CD4-positive, alpha-beta memory T cell (primary cell): ENCODE measurements at regions of chr2 and their contacts with region 1.

Region 1: GRCh38 chr2:85750587-85751575 is 2.9 kb upstream of the ATOH8 start:
- DNase-seq: peak in 4 of 5 donors; percentile 31 to 46 (median 44)
- H3K4me3 ChIP-seq: no peak overlapping the region
- H3K4me3 Mint-ChIP-seq: peak overlapping the region in 4 of 8 donors; percentile 9 to 71 (median 24)
- H3K27ac ChIP-seq: no peak overlapping the region
- H3K27ac Mint-ChIP-seq: no peak overlapping the region
- H3K4me1 ChIP-seq: peaks cover 17% of the 10 kb centered on the region
- H3K4me1 Mint-ChIP-seq: peaks cover 5 to 30% (median 12%) of the 10 kb centered on the region in 4 donors
- H3K27me3 ChIP-seq: peaks cover 23% of the 10 kb centered on the region
- H3K27me3 Mint-ChIP-seq: peaks cover 32 to 60% of the 10 kb centered on the region in 2 donors

Region 2: DNA sequence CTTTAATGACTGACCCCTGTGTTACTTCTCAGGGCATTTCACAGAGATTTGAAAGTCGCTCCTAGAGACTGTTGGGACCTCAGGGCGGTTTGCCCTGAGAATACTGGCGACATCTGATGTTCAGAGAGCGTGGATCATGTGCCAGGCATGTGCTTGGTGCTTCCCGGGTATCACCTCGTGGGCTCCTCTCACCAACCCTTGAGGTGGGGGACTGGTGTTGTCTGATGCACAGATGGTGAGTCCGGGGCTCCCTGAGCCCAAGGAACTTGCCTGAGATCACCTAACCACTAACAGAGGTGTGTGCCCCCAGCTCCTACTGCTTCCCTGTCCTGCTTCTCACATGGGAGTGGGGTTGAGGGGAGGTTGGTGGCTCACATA is 19.1 kb after region 1 on chr2:
- CTCF ChIA-PET with region 1: no interaction called
- POLR2A ChIA-PET with region 1: no interaction called
- intact Hi-C with region 1: no loop called
- DNase-seq: no peak
- H3K4me3 ChIP-seq: no peak overlapping the region
- H3K4me3 Mint-ChIP-seq: no peak overlapping the region
- H3K27ac ChIP-seq: no peak overlapping the region
- H3K27ac Mint-ChIP-seq: no peak overlapping the region
- H3K4me1 ChIP-seq: no peaks in the 10 kb centered on the region
- H3K4me1 Mint-ChIP-seq: no peaks in the 10 kb centered on the region
- H3K27me3 ChIP-seq: no peaks in the 10 kb centered on the region
- H3K27me3 Mint-ChIP-seq: peaks cover 31 to 41% of the 10 kb centered on the region in 2 donors

Region 3: DNA sequence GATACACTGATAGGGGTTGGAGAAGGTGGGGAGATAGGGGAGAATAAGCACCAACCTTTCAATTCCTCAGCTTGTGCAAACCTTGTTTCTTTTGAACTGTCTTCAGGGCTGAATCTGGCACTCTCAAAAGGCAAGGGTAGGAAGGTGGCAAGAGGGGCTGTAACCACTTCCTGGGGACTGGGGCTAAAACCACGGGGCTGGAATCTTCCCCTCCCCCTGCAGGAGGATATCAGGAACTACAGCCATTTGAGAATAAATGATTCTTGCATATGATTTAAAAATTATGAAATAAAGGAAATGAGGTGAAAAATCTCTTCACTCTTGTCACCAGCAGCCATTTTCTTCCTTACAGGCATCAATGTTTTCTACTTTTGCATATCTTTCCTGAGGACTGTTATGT is 53.7 kb after region 1 on chr2:
- CTCF ChIA-PET with region 1: interaction called, 3 read pairs
- POLR2A ChIA-PET with region 1: no interaction called
- intact Hi-C with region 1: loop called (anchors 2 kb)
- DNase-seq: peak in 4 of 5 donors; percentile 16 to 21 (median 18)
- H3K4me3 ChIP-seq: no peak overlapping the region
- H3K4me3 Mint-ChIP-seq: peak overlapping the region in 2 of 8 donors; percentile 7 to 48
- H3K27ac ChIP-seq: no peak overlapping the region
- H3K27ac Mint-ChIP-seq: no peak overlapping the region
- H3K4me1 ChIP-seq: peaks cover 8% of the 10 kb centered on the region
- H3K4me1 Mint-ChIP-seq: peaks cover 5 to 13% (median 8%) of the 10 kb centered on the region in 4 donors
- H3K27me3 ChIP-seq: no peaks in the 10 kb centered on the region
- H3K27me3 Mint-ChIP-seq: peaks cover 4 to 8% of the 10 kb centered on the region in 2 donors